ENCODE measurements at regions of chr2 and their contacts with region 1.

Region 1: DNA sequence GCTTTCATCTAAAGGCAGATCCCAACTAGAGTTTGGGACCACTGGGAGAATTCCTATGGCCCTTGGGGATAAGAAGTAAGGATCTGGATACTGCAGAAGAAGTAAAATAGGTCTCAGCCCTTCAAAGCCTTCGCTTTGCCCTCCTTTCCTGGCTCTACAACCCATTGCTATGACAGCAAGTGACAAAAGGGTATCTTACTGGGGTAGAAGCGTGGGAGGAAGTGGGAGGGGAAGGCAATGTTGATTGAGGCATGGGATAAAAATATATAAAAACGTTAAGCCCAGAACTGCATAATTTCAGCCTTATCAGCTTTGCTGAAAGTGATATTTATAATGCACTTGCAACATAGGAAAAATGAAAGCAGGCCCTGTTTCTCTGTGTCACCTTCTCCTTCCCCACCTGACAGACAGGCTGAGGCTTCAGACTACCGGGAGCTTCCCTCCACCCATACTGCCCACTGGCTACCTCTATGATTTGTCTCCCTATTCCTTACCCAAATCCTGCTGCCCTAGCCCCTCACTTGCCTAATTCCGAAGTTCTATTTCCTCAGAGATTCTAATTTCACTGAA is 14.9 kb upstream of the SOS1 start:
- DNase-seq: peak; percentile 38
- ATAC-seq: peak; percentile 49
- H3K4me3 Mint-ChIP-seq: peak overlapping the region; percentile 49
- H3K27ac Mint-ChIP-seq: peak overlapping the region; percentile 93
- H3K4me1 Mint-ChIP-seq: peaks cover 80% of the 10 kb centered on the region
- H3K27me3 Mint-ChIP-seq: no peaks in the 10 kb centered on the region

Region 2: GRCh38 chr2:39216346-39217191 is 80.8 kb after region 1 on chr2:
- CTCF ChIA-PET with region 1: interaction called, 5 read pairs
- POLR2A ChIA-PET with region 1: interaction called, 13 read pairs
- DNase-seq: peak; percentile 96
- ATAC-seq: peak; percentile 90
- H3K4me3 Mint-ChIP-seq: peak overlapping the region; percentile 57
- H3K27ac Mint-ChIP-seq: peak overlapping the region; percentile 97
- H3K4me1 Mint-ChIP-seq: peaks cover 76% of the 10 kb centered on the region
- H3K27me3 Mint-ChIP-seq: no peaks in the 10 kb centered on the region

Measured in activated CD8-positive, alpha-beta T cell treated with anti-CD3 and anti-CD28 coated beads, Interleukin-2, amount 10 ng/mL, durations not matched to agents 7 days and 5 days (primary cell).